A673 (cell line): ENCODE measurements at regions of chr7 and their contacts with region 1.

Region 1: GRCh38 chr7:36396150-36396549 is 6.5 kb downstream of the ANLN start:
- DNase-seq: no peak
- H3K4me3 ChIP-seq: no peak overlapping the region
- H3K27ac ChIP-seq: no peak overlapping the region
- H3K4me1 ChIP-seq: peaks cover 10% of the 10 kb centered on the region
- H3K27me3 ChIP-seq: no peaks in the 10 kb centered on the region
- CTCF ChIP-seq: no peak

Region 2: GRCh38 chr7:36303202-36304098 is 92.7 kb before region 1 on chr7:
- CTCF ChIA-PET with region 1: no interaction called
- POLR2A ChIA-PET with region 1: no interaction called
- intact Hi-C with region 1: no loop called
- DNase-seq: peak; percentile 97
- H3K4me3 ChIP-seq: no peak overlapping the region
- H3K27ac ChIP-seq: peak overlapping the region; percentile 92
- H3K4me1 ChIP-seq: peaks cover 30% of the 10 kb centered on the region
- H3K27me3 ChIP-seq: no peaks in the 10 kb centered on the region
- CTCF ChIP-seq: no peak

Region 3: DNA sequence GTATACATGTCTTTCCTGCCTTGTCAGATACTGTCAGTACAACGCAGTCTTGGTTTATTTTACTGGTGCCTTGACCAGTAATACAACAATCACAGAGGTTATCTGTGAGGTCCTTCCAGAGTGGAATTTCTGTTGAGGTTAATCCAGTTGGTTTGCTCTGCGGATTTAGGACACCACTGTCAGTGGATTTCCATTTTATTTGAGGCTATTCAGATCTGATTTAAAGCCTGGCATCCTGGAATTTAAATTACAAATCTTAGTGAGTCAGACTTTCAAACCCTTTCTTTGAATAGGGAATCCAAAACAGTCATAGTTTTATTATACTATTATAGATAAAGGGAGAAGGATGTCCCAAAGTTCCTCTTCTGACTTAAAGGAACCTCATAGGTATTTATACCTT is 34.0 kb after region 1 on chr7:
- CTCF ChIA-PET with region 1: no interaction called
- POLR2A ChIA-PET with region 1: no interaction called
- intact Hi-C with region 1: loop called (anchors 5 kb)
- DNase-seq: no peak
- H3K4me3 ChIP-seq: no peak overlapping the region
- H3K27ac ChIP-seq: no peak overlapping the region
- H3K4me1 ChIP-seq: no peaks in the 10 kb centered on the region
- H3K27me3 ChIP-seq: no peaks in the 10 kb centered on the region
- CTCF ChIP-seq: no peak